CD4-positive, alpha-beta memory T cell (primary cell): ENCODE measurements at regions of chr17 and their contacts with region 1.

Region 1: GRCh38 chr17:64025732-64026294 is 5.4 kb upstream of the ICAM2 start:
- DNase-seq: peak; percentile 95 to 98 (median 96)
- H3K4me3 ChIP-seq: peak overlapping the region in 1 of 2 donors; percentile 43
- H3K4me3 Mint-ChIP-seq: peak overlapping the region; percentile 71 to 94 (median 87)
- H3K27ac ChIP-seq: peak overlapping the region; percentile 89
- H3K27ac Mint-ChIP-seq: peak overlapping the region; percentile 94 to 99 (median 98)
- H3K4me1 ChIP-seq: peaks cover 80% of the 10 kb centered on the region
- H3K4me1 Mint-ChIP-seq: peaks cover 42 to 75% (median 59%) of the 10 kb centered on the region in 4 donors
- H3K27me3 ChIP-seq: no peaks in the 10 kb centered on the region
- H3K27me3 Mint-ChIP-seq: no peaks in the 10 kb centered on the region

Region 2: GRCh38 chr17:63911657-63912426 is 114.0 kb before region 1 on chr17:
- CTCF ChIA-PET with region 1: interaction called, 351 read pairs
- POLR2A ChIA-PET with region 1: interaction called, 6 read pairs
- intact Hi-C with region 1: loop called (anchors 1 kb)
- DNase-seq: peak; percentile 48 to 63 (median 52)
- H3K4me3 ChIP-seq: no peak overlapping the region
- H3K4me3 Mint-ChIP-seq: no peak overlapping the region
- H3K27ac ChIP-seq: no peak overlapping the region
- H3K27ac Mint-ChIP-seq: peak overlapping the region in 1 of 7 donors; percentile 87
- H3K4me1 ChIP-seq: no peaks in the 10 kb centered on the region
- H3K4me1 Mint-ChIP-seq: peaks cover 0 to 2% (median 0%) of the 10 kb centered on the region in 4 donors
- H3K27me3 ChIP-seq: no peaks in the 10 kb centered on the region
- H3K27me3 Mint-ChIP-seq: peaks cover 0 to 2% of the 10 kb centered on the region in 2 donors

Region 3: DNA sequence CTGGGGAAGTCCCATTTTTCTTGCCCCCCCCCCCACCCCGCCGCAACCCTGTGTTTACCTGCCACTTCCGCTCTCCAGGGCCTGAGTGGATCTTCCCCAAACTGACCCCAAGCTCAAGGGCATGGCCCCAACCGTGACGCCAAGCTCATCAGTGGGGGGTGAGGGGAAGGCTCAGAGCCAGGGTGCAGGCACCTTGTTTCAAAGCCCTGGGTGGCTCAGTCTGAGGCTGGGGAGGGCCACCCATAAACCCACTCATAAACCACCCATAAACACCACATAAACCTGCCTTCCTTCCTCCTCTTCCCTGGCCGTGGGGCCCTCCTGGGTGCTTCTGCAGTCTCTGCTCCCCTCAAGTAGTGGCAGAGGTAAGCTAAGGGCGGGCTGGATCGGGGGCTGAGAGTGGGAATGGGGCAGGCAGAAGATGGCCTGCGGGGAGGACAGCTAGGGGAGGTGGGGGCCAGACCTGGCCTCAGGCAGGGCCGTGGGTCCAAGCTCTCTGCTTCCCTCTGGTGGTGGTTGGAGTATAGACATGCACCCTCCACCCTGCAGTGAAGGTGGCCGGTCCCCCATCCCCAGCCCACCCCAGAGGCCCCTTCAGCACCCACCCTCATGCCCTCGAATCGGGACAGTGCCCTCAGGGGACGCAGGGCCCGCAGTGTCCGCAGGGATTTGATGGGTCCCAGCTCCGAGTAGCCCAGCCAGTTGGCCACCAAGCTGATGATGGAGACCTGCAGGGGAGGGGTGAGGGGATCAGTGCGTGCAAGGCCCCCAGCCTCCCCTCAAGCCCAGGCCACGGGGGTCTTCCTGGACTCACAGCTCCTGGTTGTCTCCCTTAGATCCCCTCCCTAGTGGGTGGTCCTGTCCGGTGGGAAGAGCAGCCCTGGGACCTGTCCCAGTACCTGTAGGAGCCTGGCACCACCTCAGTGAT is 79.1 kb before region 1 on chr17:
- CTCF ChIA-PET with region 1: interaction called, 60 read pairs
- POLR2A ChIA-PET with region 1: interaction called, 26 read pairs
- intact Hi-C with region 1: loop called (anchors 1 kb)
- DNase-seq: peak; percentile 59 to 69 (median 64)
- H3K4me3 ChIP-seq: peak overlapping the region; percentile 6 to 31
- H3K4me3 Mint-ChIP-seq: peak overlapping the region; percentile 41 to 87 (median 78)
- H3K27ac ChIP-seq: no peak overlapping the region
- H3K27ac Mint-ChIP-seq: peak overlapping the region in 6 of 7 donors; percentile 57 to 88 (median 71)
- H3K4me1 ChIP-seq: peaks cover 22% of the 10 kb centered on the region
- H3K4me1 Mint-ChIP-seq: peaks cover 4 to 31% (median 19%) of the 10 kb centered on the region in 4 donors
- H3K27me3 ChIP-seq: no peaks in the 10 kb centered on the region
- H3K27me3 Mint-ChIP-seq: no peaks in the 10 kb centered on the region

Region 4: DNA sequence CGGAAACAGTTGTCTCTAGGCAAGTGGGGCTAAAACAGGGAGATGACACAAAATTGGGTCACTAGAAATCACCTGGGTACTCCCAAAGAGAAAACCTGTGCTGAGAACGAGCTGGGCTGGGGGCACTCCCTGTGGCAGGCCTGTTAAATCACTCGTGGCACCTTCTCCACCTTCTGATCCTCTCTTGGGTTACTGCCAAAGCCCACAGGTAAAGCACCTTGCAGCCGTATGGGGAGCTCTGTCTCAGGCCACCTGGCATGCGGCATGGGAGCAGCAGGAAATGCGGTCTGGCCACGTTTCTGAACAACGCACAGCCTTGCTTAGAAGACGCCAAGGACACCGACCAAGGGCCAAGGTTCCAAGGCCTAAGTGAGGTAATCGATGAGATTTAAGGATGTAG is 16.1 kb after region 1 on chr17:
- CTCF ChIA-PET with region 1: interaction called, 110 read pairs
- POLR2A ChIA-PET with region 1: interaction called, 8 read pairs
- intact Hi-C with region 1: no loop called
- DNase-seq: no peak
- H3K4me3 ChIP-seq: no peak overlapping the region
- H3K4me3 Mint-ChIP-seq: peak overlapping the region in 4 of 8 donors; percentile 7 to 50 (median 48)
- H3K27ac ChIP-seq: no peak overlapping the region
- H3K27ac Mint-ChIP-seq: peak overlapping the region in 6 of 7 donors; percentile 53 to 95 (median 80)
- H3K4me1 ChIP-seq: no peaks in the 10 kb centered on the region
- H3K4me1 Mint-ChIP-seq: peaks cover 10 to 50% (median 19%) of the 10 kb centered on the region in 4 donors
- H3K27me3 ChIP-seq: no peaks in the 10 kb centered on the region
- H3K27me3 Mint-ChIP-seq: no peaks in the 10 kb centered on the region

Region 5: DNA sequence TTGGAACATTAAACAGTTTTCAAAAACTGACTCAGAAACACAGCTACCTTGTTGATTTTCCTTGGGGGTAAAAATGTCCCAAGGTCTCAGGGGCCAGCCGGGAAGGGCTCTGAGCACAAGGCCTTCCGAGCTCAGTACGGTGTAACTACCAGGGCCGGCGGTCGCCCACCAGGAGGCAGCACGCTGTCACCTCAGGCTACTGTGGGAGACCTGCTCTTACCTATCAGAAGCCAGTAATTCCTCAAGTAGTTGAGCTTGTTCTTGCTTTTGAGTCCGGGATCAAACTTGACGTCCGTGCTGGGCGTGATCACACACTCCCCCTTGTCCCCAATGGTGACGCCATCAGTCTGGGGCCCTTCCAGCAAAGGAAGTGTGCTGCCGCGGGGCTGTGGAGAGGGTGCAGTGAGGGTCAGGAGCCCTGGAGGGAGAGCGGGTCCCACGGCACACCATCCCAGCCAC is 38.0 kb after region 1 on chr17:
- CTCF ChIA-PET with region 1: interaction called, 29 read pairs
- POLR2A ChIA-PET with region 1: interaction called, 3 read pairs
- intact Hi-C with region 1: no loop called
- DNase-seq: peak; percentile 39 to 74 (median 54)
- H3K4me3 ChIP-seq: no peak overlapping the region
- H3K4me3 Mint-ChIP-seq: peak overlapping the region; percentile 67 to 92 (median 88)
- H3K27ac ChIP-seq: peak overlapping the region; percentile 41
- H3K27ac Mint-ChIP-seq: peak overlapping the region; percentile 7 to 97 (median 92)
- H3K4me1 ChIP-seq: peaks cover 89% of the 10 kb centered on the region
- H3K4me1 Mint-ChIP-seq: peaks cover 48 to 100% (median 77%) of the 10 kb centered on the region in 4 donors
- H3K27me3 ChIP-seq: no peaks in the 10 kb centered on the region
- H3K27me3 Mint-ChIP-seq: no peaks in the 10 kb centered on the region